Caco-2 (cell line): ENCODE measurements at regions of chr9 and their contacts with region 1.

Region 1: DNA sequence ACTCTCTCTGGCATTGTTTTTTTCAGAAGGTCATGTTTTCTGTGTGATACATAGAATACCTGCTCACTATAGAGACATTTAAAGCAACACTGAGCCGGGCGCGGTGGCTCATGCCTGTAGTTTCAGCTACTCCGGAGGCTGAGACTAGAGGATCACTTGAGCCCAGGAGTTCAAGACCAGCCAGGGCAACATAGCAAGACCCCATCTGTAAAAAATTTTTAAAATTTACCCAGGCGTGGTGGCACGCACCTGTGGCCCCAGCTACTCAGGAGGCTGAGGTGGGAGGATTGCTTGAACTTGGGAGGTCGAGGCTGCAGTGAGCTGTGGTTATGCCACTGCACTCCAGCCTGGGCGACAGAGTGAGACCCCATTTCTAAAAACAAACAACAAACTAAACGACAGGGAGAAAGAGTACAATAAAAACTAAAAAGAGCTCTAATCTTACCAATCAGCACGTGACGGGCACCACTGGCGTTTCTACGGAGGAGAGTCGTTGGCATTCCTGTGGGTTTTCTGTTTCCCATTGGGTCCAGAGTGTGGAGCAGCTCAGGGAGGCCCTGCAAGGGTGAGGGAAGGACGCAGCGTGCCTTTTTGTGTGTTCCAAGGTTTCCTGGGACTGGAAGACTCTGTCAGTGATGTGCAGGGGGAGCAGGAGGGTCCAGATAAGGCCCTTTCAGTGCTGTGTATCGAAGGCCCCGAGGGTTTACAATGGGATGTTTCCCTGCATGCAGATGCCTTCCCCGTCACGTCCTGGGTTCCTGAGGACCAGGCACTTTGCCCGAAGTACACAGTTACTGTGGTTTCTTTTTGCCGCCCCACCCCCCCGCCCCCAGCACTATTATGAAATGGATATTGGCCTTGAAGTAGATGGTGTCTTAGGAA is 7.2 kb upstream of the RNU6ATAC start:
- DNase-seq: no peak
- H3K4me3 ChIP-seq: no peak overlapping the region
- H3K4me3 Mint-ChIP-seq: no peak overlapping the region
- H3K27ac Mint-ChIP-seq: no peak overlapping the region
- H3K4me1 ChIP-seq: no peaks in the 10 kb centered on the region
- H3K4me1 Mint-ChIP-seq: peaks cover 6% of the 10 kb centered on the region
- H3K27me3 ChIP-seq: no peaks in the 10 kb centered on the region
- H3K27me3 Mint-ChIP-seq: no peaks in the 10 kb centered on the region
- CTCF ChIP-seq: no peak

Region 2: DNA sequence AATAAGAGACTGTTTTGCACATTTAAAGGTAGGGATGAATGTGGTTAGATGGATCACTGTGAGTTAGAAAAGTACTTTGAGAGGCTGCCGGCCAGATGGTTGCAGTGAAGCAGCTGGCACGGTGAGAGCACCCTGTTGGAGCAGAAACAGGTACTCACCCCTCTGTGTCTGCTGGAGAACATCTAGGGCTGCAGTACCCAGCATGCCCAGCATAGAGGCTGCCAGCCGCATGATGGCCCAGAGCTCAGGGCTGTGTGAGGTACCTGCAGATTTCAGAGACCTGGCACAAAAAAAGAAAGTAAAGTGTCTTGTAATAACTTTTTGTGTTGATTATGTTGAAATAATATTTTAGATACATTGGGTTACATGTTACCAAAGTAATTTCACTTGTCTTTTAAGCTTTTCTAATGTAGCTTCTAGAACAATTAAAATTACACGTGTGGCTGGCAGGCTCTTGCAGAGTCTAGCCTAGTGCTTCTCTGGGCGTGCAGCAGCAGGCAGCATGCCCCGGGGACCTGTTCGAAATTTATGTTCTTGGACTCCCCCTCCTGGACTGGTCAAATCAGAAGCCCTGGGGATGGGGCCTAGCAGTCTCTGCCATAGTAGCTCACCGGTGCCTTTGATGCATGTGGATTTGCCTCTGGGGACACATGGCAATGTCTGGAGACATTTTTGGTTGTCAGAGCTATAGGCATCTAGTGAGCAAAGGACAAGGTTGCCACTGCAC is 24.6 kb before region 1 on chr9:
- CTCF ChIA-PET with region 1: no interaction called
- POLR2A ChIA-PET with region 1: no interaction called
- intact Hi-C with region 1: no loop called
- DNase-seq: no peak
- H3K4me3 ChIP-seq: no peak overlapping the region
- H3K4me3 Mint-ChIP-seq: no peak overlapping the region
- H3K27ac Mint-ChIP-seq: no peak overlapping the region
- H3K4me1 ChIP-seq: no peaks in the 10 kb centered on the region
- H3K4me1 Mint-ChIP-seq: no peaks in the 10 kb centered on the region
- H3K27me3 ChIP-seq: no peaks in the 10 kb centered on the region
- H3K27me3 Mint-ChIP-seq: no peaks in the 10 kb centered on the region
- CTCF ChIP-seq: no peak

Region 3: GRCh38 chr9:134217832-134218629 is 46.5 kb after region 1 on chr9:
- CTCF ChIA-PET with region 1: interaction called, 13 read pairs
- POLR2A ChIA-PET with region 1: no interaction called
- intact Hi-C with region 1: loop called (anchors 1 kb)
- DNase-seq: peak; percentile 67 to 71
- H3K4me3 ChIP-seq: no peak overlapping the region
- H3K4me3 Mint-ChIP-seq: no peak overlapping the region
- H3K27ac Mint-ChIP-seq: no peak overlapping the region
- H3K4me1 ChIP-seq: no peaks in the 10 kb centered on the region; the same call in 1 of the 2 replicates
- H3K4me1 Mint-ChIP-seq: no peaks in the 10 kb centered on the region
- H3K27me3 ChIP-seq: no peaks in the 10 kb centered on the region
- H3K27me3 Mint-ChIP-seq: no peaks in the 10 kb centered on the region
- CTCF ChIP-seq: peak; percentile 44 to 53

Region 4: DNA sequence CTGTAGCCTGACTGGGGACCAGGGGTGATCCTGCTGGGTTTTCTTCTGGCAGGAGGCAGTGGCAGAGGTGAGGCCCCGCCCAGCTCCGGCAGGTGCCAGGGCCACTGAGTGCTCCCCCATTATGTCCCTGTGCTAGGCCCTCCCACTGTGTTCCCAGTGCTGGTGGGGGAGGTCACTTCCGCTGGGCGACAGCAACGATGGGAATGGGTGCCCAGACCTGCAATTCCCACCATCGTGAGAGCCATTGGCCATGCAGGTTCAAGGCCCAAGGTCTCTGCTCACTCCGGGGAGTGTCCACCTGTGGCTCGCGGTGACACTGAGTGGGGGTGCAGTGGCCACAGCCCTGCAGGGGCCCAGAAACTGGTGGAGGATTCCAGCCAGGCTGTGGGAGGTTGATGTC is 253.3 kb after region 1 on chr9:
- CTCF ChIA-PET with region 1: no interaction called
- POLR2A ChIA-PET with region 1: no interaction called
- intact Hi-C with region 1: loop called (anchors 5 kb)
- DNase-seq: no peak
- H3K4me3 ChIP-seq: no peak overlapping the region
- H3K4me3 Mint-ChIP-seq: no peak overlapping the region
- H3K27ac Mint-ChIP-seq: no peak overlapping the region
- H3K4me1 ChIP-seq: no peaks in the 10 kb centered on the region
- H3K4me1 Mint-ChIP-seq: no peaks in the 10 kb centered on the region
- H3K27me3 ChIP-seq: no peaks in the 10 kb centered on the region
- H3K27me3 Mint-ChIP-seq: no peaks in the 10 kb centered on the region
- CTCF ChIP-seq: no peak

Region 5: DNA sequence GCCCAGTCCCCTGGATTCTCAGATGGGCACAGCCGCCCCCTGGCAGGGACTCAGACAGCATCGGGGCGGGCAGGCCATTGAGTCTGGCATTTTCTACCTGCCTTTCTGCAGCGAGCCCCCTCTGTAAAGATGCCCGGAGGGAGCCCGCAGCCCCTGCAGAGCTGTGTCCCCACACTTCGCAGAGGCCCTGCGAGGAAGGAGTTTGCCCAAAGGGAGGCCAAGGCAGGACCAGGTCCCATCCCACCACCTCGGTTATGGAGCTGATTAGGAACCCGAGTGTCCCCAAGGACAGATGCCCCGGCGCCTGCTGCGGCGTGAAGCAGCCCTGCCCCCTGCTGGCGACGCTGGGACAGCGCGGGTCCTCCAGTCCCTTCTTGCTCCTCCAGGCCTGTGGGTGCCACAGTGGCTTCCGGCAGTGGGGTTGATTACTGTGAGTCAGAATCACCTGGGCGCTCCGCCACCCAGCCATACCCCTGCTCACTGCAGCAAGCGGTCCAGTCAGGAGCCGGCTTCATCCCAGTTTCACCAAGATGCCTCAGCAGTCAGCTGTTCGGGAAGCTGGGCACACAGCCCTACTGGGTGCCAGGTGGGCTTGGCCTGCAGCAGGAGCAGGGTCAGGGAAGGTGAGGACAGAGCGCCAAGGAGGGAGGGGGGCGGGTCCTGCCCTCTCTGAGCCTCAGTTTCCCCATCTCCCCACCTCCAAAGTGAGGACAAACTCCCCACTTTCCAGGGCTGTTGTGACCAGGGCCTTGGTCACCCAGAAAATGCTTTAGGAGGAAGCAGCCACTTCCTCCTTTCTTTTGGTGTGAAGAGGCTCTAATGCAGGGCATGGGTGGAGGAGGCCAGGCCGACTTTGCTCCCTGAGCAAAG is 271.8 kb after region 1 on chr9:
- CTCF ChIA-PET with region 1: interaction called, 46 read pairs
- POLR2A ChIA-PET with region 1: no interaction called
- intact Hi-C with region 1: no loop called
- DNase-seq: peak; percentile 84 to 85
- H3K4me3 ChIP-seq: no peak overlapping the region
- H3K4me3 Mint-ChIP-seq: no peak overlapping the region
- H3K27ac Mint-ChIP-seq: no peak overlapping the region
- H3K4me1 ChIP-seq: 0 out of 2 replicates have a peak, but pooled peaks cover 2% of the 10 kb centered on the region
- H3K4me1 Mint-ChIP-seq: no peaks in the 10 kb centered on the region
- H3K27me3 ChIP-seq: no peaks in the 10 kb centered on the region
- H3K27me3 Mint-ChIP-seq: no peaks in the 10 kb centered on the region
- CTCF ChIP-seq: peak; percentile 93 to 97